Transverse colon (tissue), 4 donors: ENCODE measurements at regions of chrX and their contacts with region 1.

Region 1: DNA sequence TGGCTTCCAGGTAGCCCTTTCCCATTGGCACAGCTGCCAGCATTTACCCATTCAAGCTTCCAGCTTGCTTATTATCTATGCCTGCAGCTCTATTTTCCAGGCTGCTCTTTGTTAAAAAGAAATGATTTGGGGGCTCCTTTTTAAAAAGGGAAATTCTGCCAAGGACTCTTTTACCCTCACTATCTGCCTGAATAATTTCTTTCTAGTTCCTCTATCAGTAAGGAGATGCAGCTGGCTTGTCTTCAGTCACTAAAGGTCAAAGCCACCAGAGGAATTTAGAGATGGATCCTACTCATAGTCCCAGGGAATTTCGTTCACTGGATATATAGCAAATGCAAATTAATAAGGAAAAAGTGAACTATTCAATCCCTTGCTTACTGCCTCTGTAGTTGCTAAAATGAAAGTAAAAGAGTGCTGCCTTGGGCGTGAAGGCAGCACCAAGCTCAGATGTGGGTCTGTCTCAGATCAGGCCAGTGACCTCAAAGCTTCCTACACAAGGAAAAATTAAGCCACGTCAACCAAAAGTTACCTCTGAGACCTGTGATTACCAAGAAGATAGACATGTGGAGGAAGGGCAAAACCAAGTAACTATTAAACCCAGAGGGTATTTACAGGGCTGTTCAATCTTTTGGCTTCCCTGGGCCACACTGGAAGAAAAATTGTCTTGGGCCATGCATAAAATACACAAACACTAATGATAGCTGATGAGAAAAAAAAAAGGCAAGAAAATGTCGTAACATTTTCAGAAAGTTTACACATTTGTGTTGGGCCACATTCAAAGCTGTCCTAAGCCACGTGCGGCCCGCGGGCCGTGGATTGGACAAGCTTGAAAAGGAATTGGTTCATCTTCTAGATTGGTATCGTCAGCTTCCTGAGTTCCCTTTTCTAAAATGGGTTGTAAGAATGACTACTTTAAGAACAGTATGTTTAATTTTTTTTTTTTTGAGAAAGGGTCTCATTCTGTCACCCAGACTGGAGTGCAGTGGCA is 5.3 kb downstream of the ARSF start:
- DNase-seq: no peak
- H3K4me3 ChIP-seq: no peak overlapping the region
- H3K27ac ChIP-seq: no peak overlapping the region
- H3K4me1 ChIP-seq: no peaks in the 10 kb centered on the region
- H3K27me3 ChIP-seq: no peaks in the 10 kb centered on the region
- CTCF ChIP-seq: no peak
- EP300 ChIP-seq: no peak
- POLR2A ChIP-seq: no peak

Region 2: GRCh38 chrX:2566055-2566454 is 480.5 kb before region 1 on chrX:
- in situ Hi-C with region 1: no loop called
- intact Hi-C with region 1: no loop called
- DNase-seq: no peak
- H3K4me3 ChIP-seq: no peak overlapping the region
- H3K27ac ChIP-seq: no peak overlapping the region
- H3K4me1 ChIP-seq: no peaks in the 10 kb centered on the region
- H3K27me3 ChIP-seq: no peaks in the 10 kb centered on the region
- CTCF ChIP-seq: no peak
- EP300 ChIP-seq: no peak
- POLR2A ChIP-seq: no peak

Region 3: DNA sequence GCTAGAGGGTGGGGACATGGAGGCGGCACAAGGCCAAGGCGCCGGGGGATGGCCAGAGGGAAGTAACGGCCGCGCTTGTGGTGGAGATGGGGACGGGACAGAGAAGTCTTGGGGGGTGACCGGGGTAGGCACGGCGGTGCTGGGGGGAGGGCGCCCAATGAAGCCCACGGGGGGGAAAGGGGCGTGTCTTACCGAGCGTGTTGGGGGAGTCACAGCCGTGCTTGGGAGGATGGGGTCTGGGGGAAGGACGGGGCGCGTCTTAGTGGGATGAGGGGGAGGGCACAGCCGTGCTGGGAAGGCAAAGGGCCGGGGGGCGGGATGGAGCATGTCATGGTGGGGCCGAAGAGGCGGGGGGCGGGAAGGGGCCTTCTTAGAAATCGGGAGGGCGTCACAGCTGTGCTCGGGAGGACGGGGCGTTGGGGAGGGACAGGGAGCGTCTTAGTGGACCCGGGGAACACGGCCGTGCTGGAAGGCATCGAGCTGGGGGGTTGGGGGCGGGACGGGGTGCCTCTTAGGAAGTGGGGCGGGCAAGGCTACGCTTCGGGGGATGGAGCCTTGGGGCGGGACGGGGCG is 118.3 kb before region 1 on chrX:
- in situ Hi-C with region 1: loop called in 1 of 4 experiments (anchors 25 kb)
- intact Hi-C with region 1: no loop called
- DNase-seq: peak; percentile 53
- H3K4me3 ChIP-seq: peak overlapping the region; percentile 20 to 75 (median 72)
- H3K27ac ChIP-seq: peak overlapping the region; percentile 96 to 99 (median 98)
- H3K4me1 ChIP-seq: peaks cover 0 to 7% (median 3%) of the 10 kb centered on the region in 4 donors
- H3K27me3 ChIP-seq: no peaks in the 10 kb centered on the region
- CTCF ChIP-seq: no peak
- EP300 ChIP-seq: no peak
- POLR2A ChIP-seq: no peak

Region 4: DNA sequence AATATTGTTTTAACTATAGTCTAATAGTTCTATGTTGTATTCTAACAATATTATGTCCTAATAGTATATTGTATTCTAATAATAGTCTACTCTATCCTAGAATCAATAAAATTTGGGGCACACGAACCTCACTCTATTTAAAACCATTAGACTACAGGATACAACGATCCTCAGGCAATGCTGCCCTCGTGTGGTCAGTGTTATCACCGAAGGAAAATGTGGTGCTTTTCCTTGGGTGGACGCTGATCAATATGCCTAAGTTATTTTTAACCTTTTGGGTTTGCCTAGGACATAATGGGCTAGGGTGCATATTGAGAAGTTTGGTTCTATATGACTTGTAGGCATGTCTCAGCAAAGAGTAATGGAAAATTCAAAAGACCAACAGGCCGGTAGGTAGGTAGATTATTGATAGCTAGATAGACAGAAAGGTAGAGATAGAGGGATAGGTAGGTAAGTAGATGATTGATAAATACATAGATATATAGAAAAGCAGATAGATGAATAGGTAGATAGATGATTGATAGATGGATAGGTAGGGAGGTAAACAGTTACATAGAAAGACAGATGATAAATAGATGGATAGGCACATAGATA is 591.8 kb after region 1 on chrX:
- in situ Hi-C with region 1: loop called in 1 of 4 experiments (anchors 25 kb)
- intact Hi-C with region 1: no loop called
- DNase-seq: peak; percentile 44
- H3K4me3 ChIP-seq: no peak overlapping the region
- H3K27ac ChIP-seq: no peak overlapping the region
- H3K4me1 ChIP-seq: no peaks in the 10 kb centered on the region
- H3K27me3 ChIP-seq: no peaks in the 10 kb centered on the region
- CTCF ChIP-seq: peak; percentile 36 to 56 (median 45)
- EP300 ChIP-seq: no peak
- POLR2A ChIP-seq: no peak